MCF 10A (cell line): ENCODE measurements at regions of chr5 and their contacts with region 1.

Region 1: GRCh38 chr5:120160120-120160895 is 303.8 kb upstream of the PRR16 start:
- DNase-seq: peak; percentile 94
- H3K4me3 Mint-ChIP-seq: no peak overlapping the region
- H3K27ac Mint-ChIP-seq: peak overlapping the region; percentile 47
- H3K4me1 Mint-ChIP-seq: peaks cover 11% of the 10 kb centered on the region
- H3K27me3 Mint-ChIP-seq: no peaks in the 10 kb centered on the region
- CTCF ChIP-seq: no peak

Region 2: GRCh38 chr5:120139039-120139438 is 21.3 kb before region 1 on chr5:
- CTCF ChIA-PET with region 1: no interaction called
- POLR2A ChIA-PET with region 1: interaction called, 3 read pairs
- intact Hi-C with region 1: loop called (anchors 1 kb)
- DNase-seq: peak; percentile 100
- H3K4me3 Mint-ChIP-seq: no peak overlapping the region
- H3K27ac Mint-ChIP-seq: peak overlapping the region; percentile 96
- H3K4me1 Mint-ChIP-seq: peaks cover 34% of the 10 kb centered on the region
- H3K27me3 Mint-ChIP-seq: no peaks in the 10 kb centered on the region
- CTCF ChIP-seq: no peak